ENCODE measurements at regions of chr11 and their contacts with region 1.

Region 1: DNA sequence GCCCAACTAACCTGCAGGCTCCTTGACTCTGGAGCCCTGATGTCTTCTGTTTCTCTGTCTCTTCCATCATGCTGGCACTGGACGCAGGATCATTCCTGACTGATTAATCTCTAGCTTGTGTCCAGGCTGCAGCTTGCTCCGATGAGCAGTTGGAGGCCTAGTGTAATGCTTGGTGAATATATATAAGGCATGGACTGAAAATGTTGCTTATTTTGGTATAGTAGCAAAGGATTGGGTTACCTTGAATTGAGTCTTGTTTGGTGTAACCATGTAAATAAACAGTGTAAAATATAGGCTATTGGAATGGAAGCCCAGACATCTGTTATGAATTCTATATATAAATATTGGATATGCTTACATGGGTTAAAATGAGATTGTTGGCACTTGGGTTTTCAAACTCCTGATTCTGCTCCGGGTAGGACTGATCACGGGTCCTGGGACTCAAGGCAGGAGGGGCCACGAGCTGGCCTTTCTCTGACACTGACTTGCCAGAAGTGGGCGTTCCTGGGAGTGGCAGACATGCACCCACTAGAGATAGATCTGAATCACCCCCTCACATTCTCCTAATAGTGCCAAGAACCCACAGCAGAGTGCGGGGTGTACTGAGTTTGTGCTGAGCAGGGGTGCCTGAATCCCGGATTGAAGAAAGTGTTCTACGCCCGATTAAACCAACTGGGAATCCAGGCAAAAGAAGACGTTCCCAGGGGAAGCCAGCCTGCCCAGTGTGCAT is 25.8 kb downstream of the LRP5 start:
- DNase-seq: peak; percentile 63
- H3K4me3 Mint-ChIP-seq: peak overlapping the region; percentile 28
- H3K27ac Mint-ChIP-seq: peak overlapping the region; percentile 95
- H3K4me1 Mint-ChIP-seq: peaks cover 44% of the 10 kb centered on the region
- H3K27me3 Mint-ChIP-seq: no peaks in the 10 kb centered on the region
- CTCF ChIP-seq: no peak

Region 2: GRCh38 chr11:68099474-68100405 is 238.5 kb before region 1 on chr11:
- CTCF ChIA-PET with region 1: no interaction called
- POLR2A ChIA-PET with region 1: no interaction called
- intact Hi-C with region 1: no loop called
- DNase-seq: no peak
- H3K4me3 Mint-ChIP-seq: no peak overlapping the region
- H3K27ac Mint-ChIP-seq: no peak overlapping the region
- H3K4me1 Mint-ChIP-seq: no peaks in the 10 kb centered on the region
- H3K27me3 Mint-ChIP-seq: no peaks in the 10 kb centered on the region
- CTCF ChIP-seq: no peak

Region 3: DNA sequence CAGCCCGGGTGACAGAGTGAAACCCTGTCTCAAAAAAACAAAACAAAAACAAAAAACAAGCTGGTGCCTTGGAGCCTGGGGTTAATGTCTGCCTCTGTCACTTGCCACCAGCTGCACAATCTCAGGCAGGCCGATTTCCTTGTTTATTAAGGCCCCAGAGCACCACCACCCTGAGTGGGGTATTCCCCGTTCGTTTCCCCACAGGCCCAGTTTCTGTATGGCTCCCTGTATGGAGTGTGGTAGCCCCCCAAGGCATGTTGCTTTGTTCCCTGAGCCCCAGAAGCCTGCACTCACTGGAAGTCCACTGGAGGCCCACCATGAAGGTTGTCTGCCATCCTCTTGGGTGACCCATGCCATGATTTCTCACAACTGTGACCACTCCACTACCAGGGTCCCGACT is 187.0 kb before region 1 on chr11:
- CTCF ChIA-PET with region 1: no interaction called
- POLR2A ChIA-PET with region 1: no interaction called
- intact Hi-C with region 1: no loop called
- DNase-seq: no peak
- H3K4me3 Mint-ChIP-seq: no peak overlapping the region
- H3K27ac Mint-ChIP-seq: no peak overlapping the region
- H3K4me1 Mint-ChIP-seq: peaks cover 7% of the 10 kb centered on the region
- H3K27me3 Mint-ChIP-seq: no peaks in the 10 kb centered on the region
- CTCF ChIP-seq: no peak

Region 4: DNA sequence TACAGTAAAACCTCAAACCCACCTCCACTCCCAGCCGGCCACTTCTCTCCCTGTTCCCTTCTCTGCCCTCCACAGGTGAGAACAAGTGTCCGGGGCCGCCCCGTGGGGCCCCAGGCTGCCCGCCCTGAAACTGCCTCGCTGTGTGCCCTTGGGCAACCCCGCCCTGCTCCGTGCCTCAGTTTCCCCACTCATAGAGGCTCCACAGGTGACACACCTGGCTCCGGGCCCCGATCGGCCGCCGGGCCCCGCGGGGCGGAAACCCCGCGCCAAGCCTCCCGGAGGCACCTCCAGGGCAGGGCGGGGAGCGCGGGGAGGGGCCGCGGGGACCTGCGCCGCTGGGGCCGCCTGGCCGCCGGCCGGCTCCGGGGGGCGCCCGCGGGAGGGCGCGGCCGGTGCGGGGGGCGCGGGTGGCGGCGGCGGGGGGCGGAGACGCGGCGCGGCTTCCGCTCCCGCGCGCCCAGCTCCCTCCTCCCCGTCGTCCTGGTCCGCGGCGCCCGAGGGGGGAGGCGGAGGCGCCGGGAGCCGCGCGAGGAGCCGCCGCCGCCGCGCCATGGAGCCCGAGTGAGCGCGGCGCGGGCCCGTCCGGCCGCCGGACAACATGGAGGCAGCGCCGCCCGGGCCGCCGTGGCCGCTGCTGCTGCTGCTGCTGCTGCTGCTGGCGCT is 26.0 kb before region 1 on chr11 and contains the start of gene LRP5:
- CTCF ChIA-PET with region 1: no interaction called
- POLR2A ChIA-PET with region 1: interaction called, 66 read pairs
- intact Hi-C with region 1: no loop called
- DNase-seq: no peak
- H3K4me3 Mint-ChIP-seq: peak within 1 kb of the TSS; percentile 87
- H3K27ac Mint-ChIP-seq: peak within 1 kb of the TSS; percentile 88
- H3K4me1 Mint-ChIP-seq: peaks cover 40% of the 10 kb centered on the region
- H3K27me3 Mint-ChIP-seq: no peaks in the 10 kb centered on the region
- CTCF ChIP-seq: no peak
- total RNA-seq, gene LRP5: 31.6 and 32.8 TPM in 2 replicates

Region 5: GRCh38 chr11:68321293-68322041 is 16.7 kb before region 1 on chr11:
- CTCF ChIA-PET with region 1: interaction called, 5 read pairs
- POLR2A ChIA-PET with region 1: interaction called, 66 read pairs
- intact Hi-C with region 1: no loop called
- DNase-seq: peak; percentile 73
- H3K4me3 Mint-ChIP-seq: peak overlapping the region; percentile 49
- H3K27ac Mint-ChIP-seq: peak overlapping the region; percentile 81
- H3K4me1 Mint-ChIP-seq: peaks cover 25% of the 10 kb centered on the region
- H3K27me3 Mint-ChIP-seq: no peaks in the 10 kb centered on the region
- CTCF ChIP-seq: no peak

Region 6: GRCh38 chr11:68369756-68370155 is 31.5 kb after region 1 on chr11:
- CTCF ChIA-PET with region 1: no interaction called
- POLR2A ChIA-PET with region 1: no interaction called
- intact Hi-C with region 1: no loop called
- DNase-seq: no peak
- H3K4me3 Mint-ChIP-seq: no peak overlapping the region
- H3K27ac Mint-ChIP-seq: no peak overlapping the region
- H3K4me1 Mint-ChIP-seq: no peaks in the 10 kb centered on the region
- H3K27me3 Mint-ChIP-seq: no peaks in the 10 kb centered on the region
- CTCF ChIP-seq: no peak